Naive thymus-derived CD4-positive, alpha-beta T cell (primary cell): ENCODE measurements at regions of chr19 and their contacts with region 1.

Region 1: DNA sequence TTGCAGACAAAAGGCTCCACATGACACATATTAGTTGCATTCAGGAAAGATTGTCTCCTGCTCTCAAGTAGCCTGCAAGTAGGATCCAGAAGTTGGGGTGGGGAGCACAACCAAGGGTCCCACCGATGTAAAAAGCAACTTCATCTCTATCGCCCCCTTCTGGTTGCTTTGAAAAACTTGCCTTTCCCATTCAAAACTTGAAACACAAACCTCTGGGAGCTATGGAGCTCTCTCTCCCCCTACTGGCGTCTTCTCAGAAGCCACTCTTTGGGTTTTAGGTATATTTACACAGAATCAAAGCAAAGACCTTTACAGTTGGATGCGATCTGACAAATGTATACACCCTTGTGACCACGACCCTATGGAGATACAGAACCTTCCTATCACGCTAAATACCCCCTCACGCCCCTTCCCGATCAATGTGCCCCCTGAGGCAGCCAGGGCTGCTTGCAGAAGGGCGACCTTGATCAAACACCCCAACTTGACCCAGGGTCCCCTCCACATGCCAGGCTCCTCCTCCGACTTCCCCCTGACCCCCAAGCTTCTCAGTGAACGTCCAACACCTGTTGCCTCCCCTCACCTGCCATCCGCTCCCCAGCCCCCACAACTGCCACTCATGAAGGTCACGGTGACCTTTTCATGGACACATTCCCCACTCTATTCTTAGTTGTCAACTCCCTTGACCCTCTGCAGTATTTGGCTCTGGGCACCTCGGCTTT is 10.1 kb downstream of the NOSIP start:
- DNase-seq: peak in 7 of 9 donors; percentile 75 to 88 (median 83)
- ATAC-seq: peak; percentile 64
- H3K4me3 ChIP-seq: no peak overlapping the region
- H3K4me3 Mint-ChIP-seq: peak overlapping the region; percentile 64 to 80 (median 75)
- H3K27ac ChIP-seq: peak overlapping the region; percentile 56
- H3K27ac Mint-ChIP-seq: peak overlapping the region; percentile 86 to 99 (median 93)
- H3K4me1 ChIP-seq: peaks cover 37 to 53% of the 10 kb centered on the region in 2 donors
- H3K4me1 Mint-ChIP-seq: peaks cover 34 to 70% (median 61%) of the 10 kb centered on the region in 7 donors
- H3K27me3 ChIP-seq: no peaks in the 10 kb centered on the region
- H3K27me3 Mint-ChIP-seq: peaks cover 0 to 2% (median 0%) of the 10 kb centered on the region in 5 donors

Region 2: DNA sequence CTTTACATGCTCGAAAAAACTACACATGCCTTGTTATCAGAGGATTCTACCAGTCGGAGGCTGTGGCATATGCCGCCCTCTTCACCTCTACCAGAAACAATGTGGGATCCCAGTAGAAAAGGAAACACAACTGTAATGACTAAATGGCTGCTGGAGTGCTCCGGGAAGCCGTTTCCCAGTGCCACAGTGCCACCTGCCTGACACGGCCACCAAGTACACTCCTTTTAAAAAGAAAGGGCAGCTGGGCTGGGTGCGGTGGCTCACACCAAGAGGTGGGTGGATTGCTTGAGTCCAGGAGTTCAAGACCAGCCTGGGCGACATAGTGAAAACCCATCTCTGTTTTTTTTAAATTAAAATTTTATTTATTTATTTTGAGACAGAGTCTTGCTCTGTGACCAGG is 345.4 kb before region 1 on chr19:
- CTCF ChIA-PET with region 1: interaction called, 3 read pairs
- POLR2A ChIA-PET with region 1: no interaction called
- intact Hi-C with region 1: loop called in 1 of 2 experiments (anchors 1 kb)
- DNase-seq: peak in 3 of 9 donors; percentile 15 to 33 (median 24)
- ATAC-seq: peak; percentile 56
- H3K4me3 ChIP-seq: no peak overlapping the region
- H3K4me3 Mint-ChIP-seq: no peak overlapping the region
- H3K27ac ChIP-seq: no peak overlapping the region
- H3K27ac Mint-ChIP-seq: no peak overlapping the region
- H3K4me1 ChIP-seq: peaks cover 4 to 9% of the 10 kb centered on the region in 2 donors
- H3K4me1 Mint-ChIP-seq: peaks cover 5 to 7% (median 6%) of the 10 kb centered on the region in 7 donors
- H3K27me3 ChIP-seq: no peaks in the 10 kb centered on the region
- H3K27me3 Mint-ChIP-seq: peaks cover 2 to 6% (median 4%) of the 10 kb centered on the region in 5 donors

Region 3: DNA sequence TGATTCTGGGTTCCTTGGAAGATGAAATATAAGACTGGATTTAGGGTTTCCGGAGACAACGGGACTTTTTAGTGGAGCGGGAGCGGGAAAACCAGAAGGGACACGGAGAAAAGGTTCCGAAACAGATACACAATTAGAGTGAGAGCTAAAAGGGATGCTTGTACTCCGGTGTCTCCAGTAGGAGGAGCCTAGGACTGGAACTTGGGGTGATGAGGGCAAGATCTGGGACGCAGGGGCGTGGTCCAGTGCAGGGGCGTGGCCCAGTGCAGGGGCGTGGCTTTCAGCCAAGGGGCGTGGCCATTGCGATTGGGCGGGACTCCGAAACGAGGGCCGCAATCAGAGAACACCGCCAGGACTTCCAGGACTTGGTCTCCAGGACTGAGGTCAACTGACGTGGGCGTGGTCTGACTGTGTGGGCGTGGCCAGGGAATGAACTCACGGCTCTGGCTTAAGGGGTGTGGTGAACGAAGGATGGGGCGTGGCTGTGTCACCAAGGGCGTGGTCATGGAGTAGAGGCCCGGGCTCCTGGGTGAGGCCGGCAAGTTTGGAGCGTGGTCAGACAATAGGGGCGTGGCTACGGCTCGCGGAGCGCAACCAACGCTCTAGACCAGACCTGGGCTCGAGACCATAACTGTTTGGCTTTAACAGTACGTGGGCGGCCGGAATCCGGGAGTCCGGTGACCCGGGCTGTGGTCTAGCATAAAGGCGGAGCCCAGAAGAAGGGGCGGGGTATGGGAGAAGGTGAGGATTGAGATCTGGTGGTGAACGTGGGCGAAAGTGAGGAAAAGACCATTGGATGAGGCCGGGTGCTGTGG is 206.8 kb before region 1 on chr19 and contains the start of gene DKKL1:
- CTCF ChIA-PET with region 1: no interaction called
- POLR2A ChIA-PET with region 1: no interaction called
- intact Hi-C with region 1: no loop called
- DNase-seq: peak; percentile 33 to 84 (median 62)
- ATAC-seq: peak; percentile 93
- H3K4me3 ChIP-seq: peak within 1 kb of the TSS; percentile 47
- H3K4me3 Mint-ChIP-seq: peak within 1 kb of the TSS in 1 of 10 donors; percentile 45
- H3K27ac ChIP-seq: no peak within 1 kb of the TSS
- H3K27ac Mint-ChIP-seq: peak within 1 kb of the TSS in 1 of 9 donors; percentile 70
- H3K4me1 ChIP-seq: peaks cover 11 to 28% of the 10 kb centered on the region in 2 donors
- H3K4me1 Mint-ChIP-seq: peaks cover 5 to 21% (median 12%) of the 10 kb centered on the region in 7 donors
- H3K27me3 ChIP-seq: peaks cover 5 to 18% of the 10 kb centered on the region in 2 donors
- H3K27me3 Mint-ChIP-seq: peaks cover 0 to 36% (median 16%) of the 10 kb centered on the region in 5 donors
- total RNA-seq, gene DKKL1: not detected

Region 4: GRCh38 chr19:49473868-49474544 is 96.3 kb before region 1 on chr19 and contains the start of gene FLT3LG:
- CTCF ChIA-PET with region 1: interaction called, 9 read pairs
- POLR2A ChIA-PET with region 1: interaction called, 9 read pairs
- intact Hi-C with region 1: loop called (anchors 1 kb)
- DNase-seq: peak; percentile 91 to 98 (median 96)
- ATAC-seq: peak; percentile 72
- H3K4me3 ChIP-seq: peak within 1 kb of the TSS; percentile 87
- H3K4me3 Mint-ChIP-seq: peak within 1 kb of the TSS; percentile 91 to 100 (median 96)
- H3K27ac ChIP-seq: peak within 1 kb of the TSS; percentile 99
- H3K27ac Mint-ChIP-seq: peak within 1 kb of the TSS; percentile 95 to 100 (median 98)
- H3K4me1 ChIP-seq: peaks cover 50 to 52% of the 10 kb centered on the region in 2 donors
- H3K4me1 Mint-ChIP-seq: peaks cover 18 to 62% (median 51%) of the 10 kb centered on the region in 7 donors
- H3K27me3 ChIP-seq: no peaks in the 10 kb centered on the region
- H3K27me3 Mint-ChIP-seq: no peaks in the 10 kb centered on the region
- total RNA-seq, gene FLT3LG: 90.6 to 401 (median 280) TPM

Region 5: DNA sequence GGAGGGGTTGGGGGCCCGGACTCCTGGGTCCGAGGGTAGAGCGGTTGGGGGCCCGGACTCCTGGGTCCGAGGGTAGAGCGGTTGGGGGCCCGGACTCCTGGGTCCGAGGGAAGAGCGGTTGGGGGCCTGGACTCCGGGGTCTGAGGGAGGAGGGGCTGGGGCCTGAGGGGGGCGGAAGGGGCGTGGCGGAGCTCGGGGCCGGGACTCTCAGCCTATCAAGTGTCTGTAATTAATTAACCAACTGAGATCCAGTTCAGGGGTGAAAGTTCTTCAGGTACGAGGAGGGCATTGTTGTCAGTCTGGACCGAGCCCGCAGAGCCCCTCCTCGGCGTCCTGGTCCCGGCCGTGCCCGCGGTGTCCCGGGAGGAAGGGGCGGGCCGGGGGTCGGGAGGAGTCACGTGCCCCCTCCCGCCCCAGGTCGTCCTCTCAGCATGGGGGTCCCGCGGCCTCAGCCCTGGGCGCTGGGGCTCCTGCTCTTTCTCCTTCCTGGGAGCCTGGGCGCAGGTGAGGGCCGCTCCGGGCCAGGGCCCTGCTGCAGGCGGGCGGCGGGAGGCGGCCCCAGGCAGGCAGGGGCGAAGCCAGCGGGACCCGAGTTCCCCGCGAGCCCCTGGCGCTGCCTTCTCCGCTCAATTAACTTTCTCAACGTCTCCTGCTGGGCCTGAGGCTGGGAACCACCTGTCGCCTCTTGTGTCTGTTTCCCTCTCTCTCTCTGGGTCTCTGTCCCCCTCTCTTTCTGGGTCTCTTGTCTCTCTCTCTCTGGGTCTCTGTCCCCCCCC is 57.1 kb before region 1 on chr19:
- CTCF ChIA-PET with region 1: interaction called, 314 read pairs
- POLR2A ChIA-PET with region 1: interaction called, 118 read pairs
- intact Hi-C with region 1: no loop called
- DNase-seq: peak in 1 of 9 donors; percentile 12
- ATAC-seq: peak; percentile 49
- H3K4me3 ChIP-seq: peak overlapping the region; percentile 61
- H3K4me3 Mint-ChIP-seq: peak overlapping the region; percentile 84 to 95 (median 90)
- H3K27ac ChIP-seq: peak overlapping the region; percentile 81
- H3K27ac Mint-ChIP-seq: peak overlapping the region; percentile 74 to 92 (median 89)
- H3K4me1 ChIP-seq: peaks cover 11 to 40% of the 10 kb centered on the region in 2 donors
- H3K4me1 Mint-ChIP-seq: peaks cover 24 to 57% (median 40%) of the 10 kb centered on the region in 7 donors
- H3K27me3 ChIP-seq: no peaks in the 10 kb centered on the region
- H3K27me3 Mint-ChIP-seq: peaks cover 0 to 13% (median 0%) of the 10 kb centered on the region in 5 donors

Region 6: DNA sequence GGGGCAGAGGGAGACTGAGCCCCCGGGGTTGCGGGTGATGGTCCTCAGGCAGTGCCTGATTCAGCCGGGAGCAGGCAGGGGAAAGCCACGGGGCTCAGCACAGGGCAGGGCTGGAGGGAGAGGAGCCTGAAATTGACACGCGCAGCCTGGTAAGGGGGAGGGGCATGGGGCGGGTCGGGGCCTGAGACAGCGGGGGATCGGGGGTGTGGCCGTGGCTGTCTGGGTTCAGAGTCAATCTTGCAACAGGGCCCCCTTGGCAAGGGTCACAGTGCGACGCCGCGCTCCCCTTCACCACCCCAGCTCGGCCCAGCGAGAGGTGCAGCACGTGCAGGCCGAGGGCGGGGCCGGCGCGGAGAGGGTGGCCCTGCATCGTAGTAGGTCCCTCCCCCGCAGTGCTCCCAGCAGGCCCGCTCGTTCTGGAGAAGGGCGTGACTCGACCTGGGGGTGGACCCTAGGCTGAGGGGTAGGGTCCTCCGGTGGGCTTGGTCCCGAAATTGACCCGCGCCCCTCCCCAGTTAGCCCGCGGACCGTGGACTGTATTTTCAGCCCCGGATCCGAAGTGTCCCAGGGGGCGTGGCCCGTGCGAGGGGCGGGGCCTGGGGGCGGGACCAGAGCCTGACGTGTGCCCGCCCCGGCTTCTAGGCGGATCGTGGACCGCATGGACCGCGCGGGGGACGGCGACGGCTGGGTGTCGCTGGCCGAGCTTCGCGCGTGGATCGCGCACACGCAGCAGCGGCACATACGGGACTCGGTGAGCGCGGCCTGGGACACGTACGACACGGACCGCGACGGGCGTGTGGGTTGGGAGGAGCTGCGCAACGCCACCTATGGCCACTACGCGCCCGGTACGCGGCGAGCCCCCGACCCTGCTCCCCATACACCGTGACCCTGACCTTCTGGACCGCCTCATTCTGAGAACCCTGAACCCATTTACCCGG is 36.5 kb before region 1 on chr19:
- CTCF ChIA-PET with region 1: interaction called, 6 read pairs
- POLR2A ChIA-PET with region 1: interaction called, 17 read pairs
- intact Hi-C with region 1: loop called in 1 of 2 experiments (anchors 1 kb)
- DNase-seq: peak; percentile 80 to 96 (median 89)
- ATAC-seq: peak; percentile 94
- H3K4me3 ChIP-seq: peak overlapping the region; percentile 58
- H3K4me3 Mint-ChIP-seq: peak overlapping the region; percentile 77 to 95 (median 91)
- H3K27ac ChIP-seq: peak overlapping the region; percentile 66
- H3K27ac Mint-ChIP-seq: peak overlapping the region; percentile 41 to 95 (median 72)
- H3K4me1 ChIP-seq: peaks cover 12 to 21% of the 10 kb centered on the region in 2 donors
- H3K4me1 Mint-ChIP-seq: peaks cover 19 to 32% (median 24%) of the 10 kb centered on the region in 7 donors
- H3K27me3 ChIP-seq: no peaks in the 10 kb centered on the region
- H3K27me3 Mint-ChIP-seq: peaks cover 0 to 4% (median 0%) of the 10 kb centered on the region in 5 donors

Region 7: GRCh38 chr19:49555600-49556411 is 14.5 kb before region 1 on chr19:
- CTCF ChIA-PET with region 1: interaction called, 231 read pairs
- POLR2A ChIA-PET with region 1: interaction called, 687 read pairs
- intact Hi-C with region 1: loop called (anchors 1 kb)
- DNase-seq: peak; percentile 59 to 94 (median 91)
- ATAC-seq: peak; percentile 89
- H3K4me3 ChIP-seq: peak overlapping the region; percentile 39
- H3K4me3 Mint-ChIP-seq: peak overlapping the region; percentile 62 to 90 (median 82)
- H3K27ac ChIP-seq: peak overlapping the region; percentile 88
- H3K27ac Mint-ChIP-seq: peak overlapping the region; percentile 93 to 100 (median 98)
- H3K4me1 ChIP-seq: peaks cover 53 to 71% of the 10 kb centered on the region in 2 donors
- H3K4me1 Mint-ChIP-seq: peaks cover 48 to 75% (median 68%) of the 10 kb centered on the region in 7 donors
- H3K27me3 ChIP-seq: no peaks in the 10 kb centered on the region
- H3K27me3 Mint-ChIP-seq: no peaks in the 10 kb centered on the region

Region 8: DNA sequence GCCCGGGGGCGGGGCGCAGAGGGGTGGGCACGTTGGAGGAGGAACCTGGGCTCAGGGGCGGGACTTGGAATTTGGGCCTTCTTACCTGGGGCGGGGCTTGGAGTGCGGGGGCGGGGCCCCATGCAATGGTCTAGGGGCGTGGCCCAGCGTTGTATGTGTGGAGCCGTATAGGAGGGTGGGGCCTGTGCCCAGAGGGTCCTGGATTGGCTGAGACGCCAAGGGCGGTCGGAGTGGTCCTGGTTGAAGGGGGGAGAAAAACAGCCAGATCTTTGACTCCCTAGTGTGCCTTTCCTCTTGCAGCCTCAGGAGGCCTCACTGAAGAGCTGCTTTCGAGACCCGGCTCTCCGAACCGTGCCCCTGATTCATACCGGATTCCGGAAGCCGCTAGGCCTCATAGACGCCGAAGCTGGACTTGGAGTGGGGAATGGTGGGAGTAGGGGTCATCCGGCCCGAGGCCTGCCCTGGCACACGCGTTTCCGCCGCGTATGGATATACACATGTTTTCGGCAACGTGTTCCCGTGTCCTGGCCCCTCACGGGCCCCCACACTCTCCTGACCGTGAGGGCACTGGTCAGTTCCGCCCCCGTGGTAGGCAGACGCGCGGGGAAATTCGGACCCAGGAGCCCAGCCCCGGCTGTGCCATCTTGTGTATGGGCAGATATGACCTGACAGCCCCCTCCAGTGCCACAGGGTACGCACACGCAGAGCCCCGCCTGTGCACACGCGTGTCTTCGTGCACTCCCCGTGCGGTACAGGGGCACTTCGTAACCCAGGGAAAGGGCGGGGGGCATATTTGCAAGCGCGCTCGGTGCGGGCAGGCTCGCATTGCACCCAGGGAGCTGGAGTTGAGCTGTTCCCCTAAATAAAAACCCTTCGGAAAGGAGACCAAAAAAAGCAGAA is 20.0 kb after region 1 on chr19:
- CTCF ChIA-PET with region 1: interaction called, 3 read pairs
- POLR2A ChIA-PET with region 1: interaction called, 15 read pairs
- intact Hi-C with region 1: no loop called
- DNase-seq: peak; percentile 85 to 98 (median 97)
- ATAC-seq: peak; percentile 90
- H3K4me3 ChIP-seq: peak overlapping the region; percentile 97
- H3K4me3 Mint-ChIP-seq: peak overlapping the region; percentile 85 to 95 (median 94)
- H3K27ac ChIP-seq: peak overlapping the region; percentile 86
- H3K27ac Mint-ChIP-seq: peak overlapping the region; percentile 76 to 95 (median 93)
- H3K4me1 ChIP-seq: peaks cover 15 to 18% of the 10 kb centered on the region in 2 donors
- H3K4me1 Mint-ChIP-seq: peaks cover 26 to 42% (median 31%) of the 10 kb centered on the region in 7 donors
- H3K27me3 ChIP-seq: no peaks in the 10 kb centered on the region
- H3K27me3 Mint-ChIP-seq: peaks cover 0 to 12% (median 0%) of the 10 kb centered on the region in 5 donors

Region 9: GRCh38 chr19:49658566-49659442 is 88.5 kb after region 1 on chr19:
- CTCF ChIA-PET with region 1: no interaction called
- POLR2A ChIA-PET with region 1: no interaction called
- intact Hi-C with region 1: no loop called
- DNase-seq: no peak
- ATAC-seq: no peak
- H3K4me3 ChIP-seq: no peak overlapping the region
- H3K4me3 Mint-ChIP-seq: peak overlapping the region in 1 of 10 donors; percentile 19
- H3K27ac ChIP-seq: peak overlapping the region; percentile 53
- H3K27ac Mint-ChIP-seq: peak overlapping the region in 5 of 9 donors; percentile 19 to 82 (median 47)
- H3K4me1 ChIP-seq: peaks cover 15% of the 10 kb centered on the region in 2 donors
- H3K4me1 Mint-ChIP-seq: peaks cover 0 to 32% (median 14%) of the 10 kb centered on the region in 7 donors
- H3K27me3 ChIP-seq: no peaks in the 10 kb centered on the region
- H3K27me3 Mint-ChIP-seq: no peaks in the 10 kb centered on the region